Right ventricle myocardium superior (tissue), 1 donor: ENCODE measurements at regions of chr4 and their contacts with region 1.

Region 1: GRCh38 chr4:78517050-78517652 is 34.4 kb upstream of the ANXA3 start:
- DNase-seq: no peak
- ATAC-seq: peak; percentile 65

Region 2: DNA sequence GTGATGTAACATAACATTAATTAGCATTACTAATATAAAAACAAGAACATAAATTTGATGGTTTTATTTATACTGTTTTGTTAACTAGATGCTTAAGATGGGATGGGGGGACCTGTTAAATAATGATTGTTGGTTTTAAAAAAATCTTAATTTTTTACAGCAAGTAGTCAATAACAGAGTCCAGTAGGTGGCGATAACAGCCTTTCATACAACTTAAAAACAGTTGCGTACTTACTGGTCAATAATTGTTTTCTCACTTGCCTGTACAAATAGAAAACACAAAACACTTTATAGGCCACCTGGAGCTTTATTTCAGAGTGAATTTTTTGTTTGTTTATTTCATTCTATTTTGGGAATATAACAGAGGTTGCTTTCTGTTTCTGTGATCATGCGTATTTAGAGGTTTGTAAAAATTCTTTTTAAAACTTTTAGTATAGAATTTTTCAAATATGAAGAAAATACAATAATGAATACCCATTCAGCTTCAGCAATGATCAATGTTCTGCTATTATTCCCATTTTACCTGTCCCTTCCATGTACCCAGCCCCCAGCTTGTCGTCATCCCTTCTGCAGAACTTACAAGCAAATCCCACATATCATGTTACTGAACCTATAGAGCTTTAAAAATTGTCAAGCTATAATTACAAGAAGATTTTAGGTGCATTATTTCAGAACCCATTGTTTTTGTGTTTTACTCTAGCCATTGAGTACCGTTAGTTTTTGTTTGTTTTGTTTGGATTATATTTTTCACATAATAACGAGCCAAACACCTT is 557.4 kb before region 1 on chr4:
- intact Hi-C with region 1: loop called (anchors 10 kb)
- DNase-seq: no peak
- ATAC-seq: peak; percentile 52

Region 3: GRCh38 chr4:78766026-78766425 is 248.9 kb after region 1 on chr4:
- intact Hi-C with region 1: no loop called
- DNase-seq: no peak
- ATAC-seq: no peak